Activated CD4-positive, alpha-beta T cell treated with anti-CD3 and anti-CD28 coated beads for 36 hours (primary cell): ENCODE measurements at regions of chr4 and their contacts with region 1.

Region 1: GRCh38 chr4:103008875-103009729 is 10.4 kb downstream of the SLC9B1 start:
- DNase-seq: no peak
- ATAC-seq: peak; percentile 95
- H3K4me3 Mint-ChIP-seq: no peak overlapping the region
- H3K27ac Mint-ChIP-seq: no peak overlapping the region
- H3K4me1 Mint-ChIP-seq: no peaks in the 10 kb centered on the region
- H3K27me3 Mint-ChIP-seq: peaks cover 2% of the 10 kb centered on the region

Region 2: GRCh38 chr4:102255454-102255853 is 753.6 kb before region 1 on chr4:
- CTCF ChIA-PET with region 1: no interaction called
- POLR2A ChIA-PET with region 1: no interaction called
- intact Hi-C with region 1: loop called in 1 of 2 experiments (anchors 10 kb)
- DNase-seq: no peak
- ATAC-seq: no peak
- H3K4me3 Mint-ChIP-seq: no peak overlapping the region
- H3K27ac Mint-ChIP-seq: no peak overlapping the region
- H3K4me1 Mint-ChIP-seq: no peaks in the 10 kb centered on the region
- H3K27me3 Mint-ChIP-seq: no peaks in the 10 kb centered on the region

Region 3: GRCh38 chr4:102449751-102450352 is 559.2 kb before region 1 on chr4:
- CTCF ChIA-PET with region 1: interaction called, 7 read pairs
- POLR2A ChIA-PET with region 1: no interaction called
- intact Hi-C with region 1: loop called (anchors 1 kb)
- DNase-seq: peak; percentile 69
- ATAC-seq: peak; percentile 86
- H3K4me3 Mint-ChIP-seq: no peak overlapping the region
- H3K27ac Mint-ChIP-seq: no peak overlapping the region
- H3K4me1 Mint-ChIP-seq: peaks cover 54% of the 10 kb centered on the region
- H3K27me3 Mint-ChIP-seq: no peaks in the 10 kb centered on the region

Region 4: DNA sequence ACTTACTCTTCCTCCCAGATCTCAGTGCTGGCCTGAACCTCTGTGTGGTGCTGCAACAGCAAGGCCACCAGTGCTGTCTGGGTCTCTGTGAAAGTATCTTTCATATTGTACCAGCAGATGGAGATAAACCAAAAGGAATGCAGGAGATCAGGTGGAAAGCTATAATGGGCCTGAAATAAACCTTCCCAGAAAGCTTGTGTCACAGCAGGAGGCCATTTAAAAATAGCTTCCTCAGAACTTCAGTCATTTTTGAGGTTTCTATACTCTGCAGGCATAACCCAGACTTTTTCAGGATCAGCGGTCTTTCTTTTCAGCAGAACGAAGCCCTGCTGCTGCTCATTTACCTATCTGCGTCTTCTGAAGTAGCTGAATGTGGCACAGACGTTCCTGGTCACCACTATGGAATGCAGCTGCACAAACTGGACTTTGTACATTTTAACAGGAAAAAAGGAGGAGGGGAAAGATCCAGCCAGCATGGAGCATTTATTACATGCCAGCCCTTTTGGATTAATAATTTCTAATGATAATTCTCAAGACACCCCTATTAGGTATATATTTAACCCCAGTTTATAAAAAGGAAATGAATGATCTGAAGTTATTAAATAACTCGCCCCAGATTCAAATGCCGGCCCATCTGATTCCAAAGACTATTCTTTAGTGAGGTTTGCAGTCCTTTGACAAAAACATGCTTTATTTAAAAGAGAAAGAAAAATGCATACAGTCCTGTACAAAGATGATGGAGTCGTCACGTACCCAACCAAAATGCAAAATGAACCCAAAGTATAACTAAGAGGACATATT is 388.2 kb before region 1 on chr4:
- CTCF ChIA-PET with region 1: interaction called, 8 read pairs
- POLR2A ChIA-PET with region 1: interaction called, 4 read pairs
- intact Hi-C with region 1: loop called in 1 of 2 experiments (anchors 1 kb)
- DNase-seq: peak; percentile 30
- ATAC-seq: peak; percentile 25
- H3K4me3 Mint-ChIP-seq: no peak overlapping the region
- H3K27ac Mint-ChIP-seq: peak overlapping the region; percentile 47
- H3K4me1 Mint-ChIP-seq: peaks cover 50% of the 10 kb centered on the region
- H3K27me3 Mint-ChIP-seq: no peaks in the 10 kb centered on the region

Region 5: GRCh38 chr4:102627831-102628523 is 381.1 kb before region 1 on chr4:
- CTCF ChIA-PET with region 1: interaction called, 6 read pairs
- POLR2A ChIA-PET with region 1: no interaction called
- intact Hi-C with region 1: loop called (anchors 1 kb)
- DNase-seq: peak; percentile 48
- ATAC-seq: peak; percentile 85
- H3K4me3 Mint-ChIP-seq: peak overlapping the region; percentile 50
- H3K27ac Mint-ChIP-seq: peak overlapping the region; percentile 86
- H3K4me1 Mint-ChIP-seq: peaks cover 69% of the 10 kb centered on the region
- H3K27me3 Mint-ChIP-seq: no peaks in the 10 kb centered on the region

Region 6: DNA sequence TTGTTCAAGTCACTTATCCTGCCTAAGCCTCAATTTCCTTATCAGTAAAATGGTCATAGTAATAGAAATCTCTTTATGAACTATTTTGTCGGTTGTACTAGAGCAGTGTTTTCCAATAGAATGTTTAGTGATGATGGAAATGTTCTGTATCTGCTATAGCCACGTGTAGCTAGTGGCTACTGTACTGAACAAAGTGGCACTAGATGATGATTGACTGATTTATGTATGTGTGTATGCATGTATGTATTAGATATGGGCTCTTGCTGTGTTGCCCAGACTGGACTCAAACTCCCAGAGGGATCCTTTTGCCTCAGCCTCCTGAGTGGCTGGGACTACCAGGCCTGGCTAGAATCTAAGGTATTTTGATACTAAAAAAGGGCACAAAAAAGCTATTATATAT is 35.1 kb after region 1 on chr4:
- CTCF ChIA-PET with region 1: no interaction called
- POLR2A ChIA-PET with region 1: no interaction called
- intact Hi-C with region 1: no loop called
- DNase-seq: no peak
- ATAC-seq: no peak
- H3K4me3 Mint-ChIP-seq: no peak overlapping the region
- H3K27ac Mint-ChIP-seq: no peak overlapping the region
- H3K4me1 Mint-ChIP-seq: no peaks in the 10 kb centered on the region
- H3K27me3 Mint-ChIP-seq: no peaks in the 10 kb centered on the region

Region 7: DNA sequence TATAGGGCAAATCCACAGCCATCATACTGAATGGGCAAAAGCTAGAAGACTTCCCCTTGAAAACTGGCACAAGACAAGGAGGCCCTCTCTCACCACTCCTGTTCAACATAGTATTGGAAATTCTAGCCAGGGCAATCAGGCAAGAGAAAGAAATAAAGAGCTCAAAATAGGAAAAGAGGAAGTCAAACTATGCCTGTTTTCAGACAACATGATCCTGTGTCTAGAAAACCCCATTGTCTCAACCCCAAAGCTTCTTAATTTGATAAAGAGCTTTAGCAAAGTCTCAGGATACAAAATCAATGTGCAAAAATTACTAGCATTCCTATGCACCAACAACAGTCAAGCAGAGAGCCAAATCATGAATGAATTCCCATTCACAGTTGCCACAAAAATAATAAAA is 1325.3 kb after region 1 on chr4:
- CTCF ChIA-PET with region 1: no interaction called
- POLR2A ChIA-PET with region 1: no interaction called
- intact Hi-C with region 1: no loop called
- DNase-seq: no peak
- ATAC-seq: no peak
- H3K4me3 Mint-ChIP-seq: no peak overlapping the region
- H3K27ac Mint-ChIP-seq: no peak overlapping the region
- H3K4me1 Mint-ChIP-seq: no peaks in the 10 kb centered on the region
- H3K27me3 Mint-ChIP-seq: no peaks in the 10 kb centered on the region